PC-3 (cell line): ENCODE measurements at regions of chr3 and their contacts with region 1.

Region 1: GRCh38 chr3:177624514-177625495 is 427.5 kb upstream of the TBL1XR1 start:
- DNase-seq: peak; percentile 72
- ATAC-seq: peak; percentile 74
- H3K4me3 ChIP-seq: no peak overlapping the region
- H3K27ac ChIP-seq: peak overlapping the region; percentile 28
- H3K4me1 ChIP-seq: peaks cover 29% of the 10 kb centered on the region
- H3K27me3 ChIP-seq: no peaks in the 10 kb centered on the region
- CTCF ChIP-seq: 0 out of 2 replicates have a peak, but pooled peaks have one; percentile 20

Region 2: GRCh38 chr3:177703788-177704187 is 79.0 kb after region 1 on chr3:
- CTCF ChIA-PET with region 1: no interaction called
- POLR2A ChIA-PET with region 1: no interaction called
- intact Hi-C with region 1: no loop called
- DNase-seq: peak; percentile 8
- ATAC-seq: peak; percentile 43
- H3K4me3 ChIP-seq: no peak overlapping the region
- H3K27ac ChIP-seq: no peak overlapping the region
- H3K4me1 ChIP-seq: no peaks in the 10 kb centered on the region
- H3K27me3 ChIP-seq: no peaks in the 10 kb centered on the region
- CTCF ChIP-seq: no peak

Region 3: GRCh38 chr3:178146406-178146831 is 521.6 kb after region 1 on chr3:
- CTCF ChIA-PET with region 1: no interaction called
- POLR2A ChIA-PET with region 1: no interaction called
- intact Hi-C with region 1: loop called (anchors 10 kb)
- DNase-seq: peak; percentile 41
- ATAC-seq: peak; percentile 49
- H3K4me3 ChIP-seq: no peak overlapping the region
- H3K27ac ChIP-seq: no peak overlapping the region
- H3K4me1 ChIP-seq: peaks cover 5% of the 10 kb centered on the region; the same call in 1 of the 2 replicates
- H3K27me3 ChIP-seq: no peaks in the 10 kb centered on the region
- CTCF ChIP-seq: no peak